ENCODE measurements at regions of chr6 and their contacts with region 1.

Region 1: DNA sequence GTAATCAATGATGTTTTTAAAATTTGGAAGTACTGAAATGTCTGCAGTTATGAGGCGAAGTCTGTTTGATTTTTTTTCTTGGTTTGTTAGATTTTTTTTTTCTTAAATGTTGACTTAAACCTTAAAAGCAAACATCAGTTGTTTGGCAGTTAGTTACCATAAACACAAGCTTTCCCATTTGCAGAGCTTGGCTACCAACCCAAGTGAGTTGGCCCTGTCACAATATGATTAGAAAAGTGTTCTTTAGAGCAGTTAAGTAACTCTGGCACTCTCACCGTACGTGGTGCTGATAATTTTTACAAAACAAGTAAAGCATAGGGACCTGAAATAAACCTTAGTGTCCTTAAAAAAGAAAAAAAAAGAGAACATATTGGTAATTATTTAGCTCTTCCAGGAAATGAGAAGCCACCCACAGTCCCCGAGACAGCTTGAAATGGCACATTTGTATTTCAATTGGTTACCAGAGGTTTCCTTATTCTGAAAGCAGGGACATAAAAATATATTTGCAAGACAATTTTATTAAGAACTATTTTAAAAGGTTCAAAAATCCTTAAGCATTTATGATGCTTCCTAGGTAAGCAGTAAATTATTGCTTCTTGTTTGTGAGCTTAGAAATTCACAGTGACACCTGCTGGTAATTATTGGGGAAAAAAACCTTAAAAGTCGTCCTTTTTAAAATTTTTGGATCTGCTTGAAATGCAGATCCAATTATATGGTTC is 3.9 kb downstream of the HEY2 start:
- DNase-seq: peak; percentile 46
- ATAC-seq: no peak
- H3K4me3 ChIP-seq: no peak overlapping the region
- H3K27ac ChIP-seq: no peak overlapping the region
- H3K4me1 ChIP-seq: peaks cover 13% of the 10 kb centered on the region
- H3K27me3 ChIP-seq: peaks cover 73% of the 10 kb centered on the region
- CTCF ChIP-seq: peak; percentile 61

Region 2: DNA sequence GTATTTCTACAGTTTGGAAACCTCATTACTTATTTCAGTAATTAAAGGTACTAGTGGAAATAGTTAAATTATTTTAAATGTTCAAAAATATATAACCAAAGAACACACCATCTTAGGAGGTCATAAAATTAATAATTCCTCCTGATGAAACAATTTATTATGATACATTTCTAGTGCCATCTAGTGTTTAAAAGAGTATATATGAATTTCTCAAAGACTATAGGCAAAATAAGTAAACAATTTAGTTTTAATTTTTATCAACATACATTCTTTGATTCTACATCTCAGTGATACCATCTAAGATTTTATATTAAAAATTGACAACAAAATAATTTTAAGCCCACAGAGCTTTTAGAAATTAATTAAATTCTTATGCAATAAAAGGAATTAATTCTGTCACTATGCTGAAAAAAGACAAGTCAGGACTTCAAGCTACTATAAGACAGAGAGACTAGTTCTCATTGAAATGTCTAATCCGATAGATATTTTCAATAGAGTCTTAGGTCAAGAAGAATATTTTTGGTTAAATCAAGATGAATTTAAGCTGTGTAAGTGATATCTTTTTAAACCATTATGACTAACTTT is 898.9 kb before region 1 on chr6:
- CTCF ChIA-PET with region 1: interaction called, 11 read pairs
- POLR2A ChIA-PET with region 1: no interaction called
- intact Hi-C with region 1: no loop called
- DNase-seq: peak; percentile 16
- ATAC-seq: no peak
- H3K4me3 ChIP-seq: no peak overlapping the region
- H3K27ac ChIP-seq: no peak overlapping the region
- H3K4me1 ChIP-seq: no peaks in the 10 kb centered on the region
- H3K27me3 ChIP-seq: no peaks in the 10 kb centered on the region
- CTCF ChIP-seq: peak; percentile 54

Region 3: GRCh38 chr6:125140808-125141207 is 612.6 kb before region 1 on chr6:
- CTCF ChIA-PET with region 1: interaction called, 15 read pairs
- POLR2A ChIA-PET with region 1: no interaction called
- intact Hi-C with region 1: no loop called
- DNase-seq: no peak
- ATAC-seq: no peak
- H3K4me3 ChIP-seq: no peak overlapping the region
- H3K27ac ChIP-seq: no peak overlapping the region
- H3K4me1 ChIP-seq: no peaks in the 10 kb centered on the region
- H3K27me3 ChIP-seq: no peaks in the 10 kb centered on the region
- CTCF ChIP-seq: no peak

Region 4: GRCh38 chr6:125153391-125154117 is 599.8 kb before region 1 on chr6 and contains the start of gene TPD52L1:
- CTCF ChIA-PET with region 1: no interaction called
- POLR2A ChIA-PET with region 1: no interaction called
- intact Hi-C with region 1: loop called (anchors 1 kb)
- DNase-seq: peak; percentile 81
- ATAC-seq: peak; percentile 88
- H3K4me3 ChIP-seq: peak within 1 kb of the TSS; percentile 86
- H3K27ac ChIP-seq: no peak within 1 kb of the TSS
- H3K4me1 ChIP-seq: peaks cover 4% of the 10 kb centered on the region; the same call in 1 of the 2 replicates
- H3K27me3 ChIP-seq: no peaks in the 10 kb centered on the region
- CTCF ChIP-seq: peak; percentile 85
- total RNA-seq, gene TPD52L1: 39.4 and 41.4 TPM in 2 replicates

Region 5: GRCh38 chr6:125201961-125202591 is 551.3 kb before region 1 on chr6:
- CTCF ChIA-PET with region 1: no interaction called
- POLR2A ChIA-PET with region 1: interaction called, 13 read pairs
- intact Hi-C with region 1: no loop called
- DNase-seq: peak; percentile 88
- ATAC-seq: peak; percentile 71
- H3K4me3 ChIP-seq: peak overlapping the region; percentile 56
- H3K27ac ChIP-seq: peak overlapping the region; percentile 83
- H3K4me1 ChIP-seq: peaks cover 48% of the 10 kb centered on the region
- H3K27me3 ChIP-seq: no peaks in the 10 kb centered on the region
- CTCF ChIP-seq: no peak

Region 6: GRCh38 chr6:125314019-125314581 is 439.3 kb before region 1 on chr6:
- CTCF ChIA-PET with region 1: interaction called, 3 read pairs
- POLR2A ChIA-PET with region 1: no interaction called
- intact Hi-C with region 1: loop called (anchors 1 kb)
- DNase-seq: peak; percentile 62
- ATAC-seq: peak; percentile 88
- H3K4me3 ChIP-seq: no peak overlapping the region
- H3K27ac ChIP-seq: no peak overlapping the region
- H3K4me1 ChIP-seq: no peaks in the 10 kb centered on the region
- H3K27me3 ChIP-seq: peaks cover 18% of the 10 kb centered on the region
- CTCF ChIP-seq: peak; percentile 81

Region 7: DNA sequence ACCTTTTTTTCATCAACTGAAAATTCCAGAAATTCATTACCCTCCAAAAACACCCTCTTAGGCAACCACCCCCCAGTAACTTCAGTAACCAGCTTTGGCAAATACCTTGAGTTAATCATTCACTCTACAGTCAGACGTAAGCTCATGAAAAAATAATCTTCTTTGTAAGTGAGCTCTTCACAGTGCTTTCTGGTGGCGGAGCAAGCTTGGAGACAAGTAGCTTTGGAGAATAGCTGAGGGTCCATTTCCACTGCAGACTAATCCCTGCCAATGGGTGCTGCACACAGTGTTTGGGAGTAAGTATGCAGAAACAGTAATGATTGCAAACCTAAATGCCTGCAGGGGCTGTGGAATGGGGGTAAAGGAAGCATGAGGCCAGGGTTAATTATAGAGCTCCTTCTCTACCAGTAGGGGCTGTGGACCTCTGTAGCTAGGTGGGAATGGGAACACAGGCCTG is 146.4 kb after region 1 on chr6:
- CTCF ChIA-PET with region 1: no interaction called
- POLR2A ChIA-PET with region 1: no interaction called
- intact Hi-C with region 1: no loop called
- DNase-seq: no peak
- ATAC-seq: no peak
- H3K4me3 ChIP-seq: no peak overlapping the region
- H3K27ac ChIP-seq: no peak overlapping the region
- H3K4me1 ChIP-seq: peaks cover 8% of the 10 kb centered on the region
- H3K27me3 ChIP-seq: no peaks in the 10 kb centered on the region
- CTCF ChIP-seq: no peak

Measured in PC-3 (cell line).